OCI-LY7 (cell line): ENCODE measurements at regions of chr1 and their contacts with region 1.

Region 1: GRCh38 chr1:247390116-247390791 is 25.7 kb upstream of the NLRP3 start:
- DNase-seq: peak; percentile 86
- H3K4me3 ChIP-seq: no peak overlapping the region
- H3K27ac ChIP-seq: no peak overlapping the region
- H3K4me1 ChIP-seq: peaks cover 12% of the 10 kb centered on the region
- CTCF ChIP-seq: peak; percentile 96

Region 2: GRCh38 chr1:247487057-247487456 is 96.8 kb after region 1 on chr1:
- CTCF ChIA-PET with region 1: no interaction called
- POLR2A ChIA-PET with region 1: no interaction called
- intact Hi-C with region 1: loop called (anchors 1 kb)
- DNase-seq: peak; percentile 18
- H3K4me3 ChIP-seq: no peak overlapping the region
- H3K27ac ChIP-seq: no peak overlapping the region
- H3K4me1 ChIP-seq: no peaks in the 10 kb centered on the region
- CTCF ChIP-seq: peak; percentile 62

Region 3: DNA sequence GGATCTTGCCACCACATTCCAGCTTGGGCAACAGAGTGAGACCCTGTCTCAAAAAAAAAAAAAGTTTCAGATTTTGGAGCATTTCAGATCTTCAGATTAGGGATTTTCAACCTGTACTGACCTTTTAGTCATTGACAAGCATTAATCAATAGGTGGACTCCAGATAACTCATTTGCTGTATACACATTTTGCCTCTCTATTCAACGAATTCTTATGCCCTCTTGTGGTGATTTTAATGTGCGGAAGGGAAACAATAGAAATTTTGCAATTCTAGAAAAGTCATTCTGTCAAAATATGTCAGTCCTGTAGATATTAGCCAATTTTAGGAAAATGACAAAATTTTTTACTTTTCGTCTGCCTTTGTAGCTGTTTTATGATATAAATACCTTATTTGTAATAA is 186.2 kb after region 1 on chr1:
- CTCF ChIA-PET with region 1: no interaction called
- POLR2A ChIA-PET with region 1: no interaction called
- intact Hi-C with region 1: loop called (anchors 1 kb)
- DNase-seq: peak; percentile 11
- H3K4me3 ChIP-seq: no peak overlapping the region
- H3K27ac ChIP-seq: no peak overlapping the region
- H3K4me1 ChIP-seq: no peaks in the 10 kb centered on the region
- CTCF ChIP-seq: peak; percentile 78